Gastrocnemius medialis (tissue), 4 donors: ENCODE measurements at regions of chr2 and their contacts with region 1.

Region 1: GRCh38 chr2:240232961-240233893 is 92.8 kb upstream of the OTOS start:
- DNase-seq: peak; percentile 94 to 97
- ATAC-seq: peak; percentile 60 to 66
- H3K4me3 ChIP-seq: peak overlapping the region; percentile 48 to 52 (median 50)
- H3K27ac ChIP-seq: peak overlapping the region; percentile 95 to 98 (median 96)
- H3K4me1 ChIP-seq: peaks cover 37 to 38% of the 10 kb centered on the region in 2 donors
- H3K27me3 ChIP-seq: no peaks in the 10 kb centered on the region
- CTCF ChIP-seq: peak; percentile 90 to 98 (median 96)
- POLR2A ChIP-seq: peak in 1 of 2 donors; percentile 18

Region 2: GRCh38 chr2:240259924-240260529 is 26.8 kb after region 1 on chr2:
- in situ Hi-C with region 1: no loop called
- intact Hi-C with region 1: loop called (anchors 1 kb)
- DNase-seq: peak; percentile 62 to 86
- ATAC-seq: peak; percentile 39 to 62
- H3K4me3 ChIP-seq: no peak overlapping the region
- H3K27ac ChIP-seq: peak overlapping the region; percentile 86 to 98 (median 96)
- H3K4me1 ChIP-seq: peaks cover 47 to 56% of the 10 kb centered on the region in 2 donors
- H3K27me3 ChIP-seq: no peaks in the 10 kb centered on the region
- CTCF ChIP-seq: no peak
- POLR2A ChIP-seq: no peak

Region 3: GRCh38 chr2:240293557-240294461 is 60.6 kb after region 1 on chr2:
- in situ Hi-C with region 1: no loop called
- intact Hi-C with region 1: loop called (anchors 2 kb)
- DNase-seq: peak; percentile 58 to 86
- ATAC-seq: peak; percentile 83 to 88
- H3K4me3 ChIP-seq: peak overlapping the region in 1 of 4 donors; percentile 10
- H3K27ac ChIP-seq: peak overlapping the region; percentile 76 to 88 (median 87)
- H3K4me1 ChIP-seq: peaks cover 18 to 25% of the 10 kb centered on the region in 2 donors
- H3K27me3 ChIP-seq: no peaks in the 10 kb centered on the region
- CTCF ChIP-seq: no peak
- POLR2A ChIP-seq: no peak

Region 4: GRCh38 chr2:240369801-240370585 is 136.8 kb after region 1 on chr2:
- in situ Hi-C with region 1: no loop called
- intact Hi-C with region 1: loop called (anchors 2 kb)
- DNase-seq: peak; percentile 90 to 97
- ATAC-seq: peak; percentile 72 to 76
- H3K4me3 ChIP-seq: peak overlapping the region; percentile 0 to 39 (median 28)
- H3K27ac ChIP-seq: peak overlapping the region; percentile 96 to 99 (median 98)
- H3K4me1 ChIP-seq: peaks cover 52 to 74% of the 10 kb centered on the region in 2 donors
- H3K27me3 ChIP-seq: no peaks in the 10 kb centered on the region
- CTCF ChIP-seq: no peak
- POLR2A ChIP-seq: peak; percentile 51 to 55

Region 5: DNA sequence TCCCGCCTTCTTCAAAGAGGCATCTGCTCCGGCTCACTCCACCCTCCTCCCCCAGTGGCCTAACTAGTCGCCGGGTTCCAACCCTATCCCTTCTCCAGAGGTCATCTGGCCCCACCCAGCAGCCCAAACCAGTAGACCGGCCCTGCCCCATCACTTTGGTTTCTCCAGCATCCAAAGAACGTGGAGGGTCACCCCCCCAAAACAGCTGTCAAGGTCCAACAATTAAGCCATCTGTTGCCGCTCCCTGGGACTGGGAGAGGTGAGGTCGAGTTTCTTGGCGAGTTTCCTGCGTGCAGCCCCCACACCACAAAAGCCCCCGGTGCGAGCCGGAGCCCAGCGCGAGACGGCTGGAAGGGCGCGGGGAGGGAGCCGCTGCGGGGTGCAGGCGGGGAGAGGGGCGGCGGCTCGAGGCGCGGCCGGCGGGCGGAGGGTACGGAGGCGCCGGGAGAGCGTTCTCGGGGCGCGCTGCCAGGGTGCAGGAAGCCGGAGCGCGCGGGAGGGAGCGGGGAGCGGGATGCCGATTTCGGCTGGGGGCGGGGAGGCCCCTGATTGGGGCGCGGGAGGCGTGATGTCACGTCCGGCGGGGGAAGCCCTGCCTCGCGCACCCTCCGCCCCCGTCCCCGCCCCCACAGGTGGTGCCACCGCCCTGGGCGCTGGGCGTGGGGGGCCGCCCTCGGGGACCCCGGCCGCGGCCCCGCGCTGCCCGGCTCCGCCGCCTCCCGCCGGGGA is 201.7 kb after region 1 on chr2:
- in situ Hi-C with region 1: loop called in 3 of 4 experiments (anchors 5 to 25 kb)
- intact Hi-C with region 1: loop called (anchors 1 kb)
- DNase-seq: peak; percentile 91
- ATAC-seq: peak; percentile 52 to 64
- H3K4me3 ChIP-seq: peak overlapping the region; percentile 46 to 77 (median 59)
- H3K27ac ChIP-seq: peak overlapping the region; percentile 84 to 97 (median 93)
- H3K4me1 ChIP-seq: peaks cover 35 to 39% of the 10 kb centered on the region in 2 donors
- H3K27me3 ChIP-seq: no peaks in the 10 kb centered on the region
- CTCF ChIP-seq: no peak
- POLR2A ChIP-seq: no peak